ENCODE measurements at regions of chr10 and their contacts with region 1.

Region 1: GRCh38 chr10:33115738-33116719 is 158.0 kb upstream of the ITGB1 start:
- DNase-seq: no peak
- H3K4me3 Mint-ChIP-seq: no peak overlapping the region
- H3K27ac Mint-ChIP-seq: peak overlapping the region; percentile 32
- H3K4me1 Mint-ChIP-seq: peaks cover 45% of the 10 kb centered on the region
- H3K27me3 Mint-ChIP-seq: no peaks in the 10 kb centered on the region

Region 2: GRCh38 chr10:32929632-32930031 is 186.4 kb before region 1 on chr10:
- intact Hi-C with region 1: no loop called
- DNase-seq: no peak
- H3K4me3 Mint-ChIP-seq: no peak overlapping the region
- H3K27ac Mint-ChIP-seq: no peak overlapping the region
- H3K4me1 Mint-ChIP-seq: peaks cover 2% of the 10 kb centered on the region
- H3K27me3 Mint-ChIP-seq: no peaks in the 10 kb centered on the region

Region 3: DNA sequence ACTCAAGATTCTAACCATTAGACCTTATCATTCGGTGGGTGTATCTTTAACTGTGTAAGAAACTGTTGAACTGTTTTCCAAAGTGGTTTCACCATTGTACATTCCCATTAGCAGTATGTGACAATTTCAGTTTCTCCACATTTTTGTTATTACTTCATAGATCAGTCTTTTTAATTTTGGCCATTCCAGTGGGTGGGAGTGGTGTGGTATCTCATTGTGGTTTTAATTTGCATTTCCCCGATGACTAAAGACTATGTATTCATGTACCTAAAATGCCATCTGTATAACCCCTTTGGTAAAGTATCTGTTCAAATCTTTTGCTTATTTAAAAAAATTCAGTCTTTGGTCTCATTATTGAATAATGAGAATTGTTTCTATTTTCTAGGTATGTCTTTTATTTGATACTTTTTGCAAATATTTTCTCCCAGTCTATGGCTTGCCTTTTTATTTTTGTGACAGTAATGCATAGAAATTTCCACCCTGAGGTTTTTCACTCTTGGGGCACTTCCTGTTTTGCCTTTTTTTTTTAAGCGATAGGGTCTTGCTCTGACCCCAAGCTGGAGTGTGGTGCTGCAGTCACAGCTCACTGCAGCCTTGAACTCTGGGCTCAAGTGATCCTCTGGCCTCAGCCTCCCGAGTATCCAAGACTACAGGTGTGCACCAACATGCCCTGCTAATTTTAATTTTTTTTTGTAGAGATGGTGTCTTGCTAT is 16.9 kb before region 1 on chr10:
- intact Hi-C with region 1: loop called (anchors 1 kb)
- DNase-seq: no peak
- H3K4me3 Mint-ChIP-seq: no peak overlapping the region
- H3K27ac Mint-ChIP-seq: peak overlapping the region; percentile 86
- H3K4me1 Mint-ChIP-seq: peaks cover 27% of the 10 kb centered on the region
- H3K27me3 Mint-ChIP-seq: no peaks in the 10 kb centered on the region

Region 4: GRCh38 chr10:33143160-33143728 is 27.2 kb after region 1 on chr10:
- intact Hi-C with region 1: loop called (anchors 1 kb)
- DNase-seq: peak; percentile 79
- H3K4me3 Mint-ChIP-seq: peak overlapping the region; percentile 8
- H3K27ac Mint-ChIP-seq: peak overlapping the region; percentile 80
- H3K4me1 Mint-ChIP-seq: peaks cover 41% of the 10 kb centered on the region
- H3K27me3 Mint-ChIP-seq: peaks cover 2% of the 10 kb centered on the region

Measured in activated CD4-positive, alpha-beta T cell treated with anti-CD3 and anti-CD28 coated beads, Interleukin-2, amount 10 ng/mL, durations not matched to agents 24 days and 14 days (primary cell).